CD8-positive, alpha-beta memory T cell (primary cell): ENCODE measurements at regions of chr15 and their contacts with region 1.

Region 1: DNA sequence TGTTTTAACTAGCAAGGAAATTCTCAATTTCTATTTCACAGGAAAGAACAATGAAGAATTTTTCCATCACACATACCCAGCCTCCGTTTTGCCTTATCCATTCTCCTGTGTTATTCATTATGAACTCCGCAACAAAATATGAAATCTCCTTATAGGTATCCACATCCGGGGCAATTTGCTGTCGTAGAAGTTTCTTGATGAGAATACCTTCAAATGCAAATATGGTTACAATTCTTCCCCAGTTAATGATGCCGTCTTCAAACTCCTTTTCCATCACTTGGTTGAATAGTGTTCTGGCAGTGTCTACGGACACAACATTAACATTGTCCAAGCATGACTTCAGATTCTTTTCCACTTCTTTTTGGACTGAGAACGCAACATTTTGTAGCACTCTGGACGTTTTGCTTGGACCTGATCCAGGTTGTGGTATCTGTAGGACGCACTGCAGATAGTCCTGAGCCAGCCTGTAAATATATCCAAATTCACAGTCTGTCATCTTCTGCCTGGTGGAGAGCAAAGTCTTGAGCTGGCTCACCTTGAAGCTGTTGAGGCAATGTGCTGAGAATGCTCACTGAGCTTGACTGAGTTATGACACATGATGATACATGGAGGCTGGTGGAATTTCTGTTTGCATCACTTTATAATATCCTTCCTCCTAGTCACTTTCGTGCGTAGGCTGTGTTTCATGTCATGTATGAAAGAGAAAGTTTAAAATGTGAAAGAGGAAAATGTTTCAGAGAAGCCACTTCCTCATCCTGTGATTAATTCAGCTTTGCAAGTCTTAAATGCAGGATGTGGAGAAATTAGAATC is at the start of gene BCL2A1:
- DNase-seq: peak; percentile 5 to 70 (median 63)
- H3K4me3 ChIP-seq: peak within 1 kb of the TSS; percentile 86
- H3K4me3 Mint-ChIP-seq: peak within 1 kb of the TSS; percentile 89 to 98 (median 93)
- H3K27ac ChIP-seq: peak within 1 kb of the TSS; percentile 64
- H3K27ac Mint-ChIP-seq: peak within 1 kb of the TSS; percentile 89 to 99 (median 94)
- H3K4me1 ChIP-seq: peaks cover 45% of the 10 kb centered on the region
- H3K4me1 Mint-ChIP-seq: peaks cover 41 to 73% (median 61%) of the 10 kb centered on the region in 3 donors
- H3K27me3 ChIP-seq: no peaks in the 10 kb centered on the region
- H3K27me3 Mint-ChIP-seq: no peaks in the 10 kb centered on the region
- total RNA-seq, gene BCL2A1: 55.8 to 56.8 TPM

Region 2: DNA sequence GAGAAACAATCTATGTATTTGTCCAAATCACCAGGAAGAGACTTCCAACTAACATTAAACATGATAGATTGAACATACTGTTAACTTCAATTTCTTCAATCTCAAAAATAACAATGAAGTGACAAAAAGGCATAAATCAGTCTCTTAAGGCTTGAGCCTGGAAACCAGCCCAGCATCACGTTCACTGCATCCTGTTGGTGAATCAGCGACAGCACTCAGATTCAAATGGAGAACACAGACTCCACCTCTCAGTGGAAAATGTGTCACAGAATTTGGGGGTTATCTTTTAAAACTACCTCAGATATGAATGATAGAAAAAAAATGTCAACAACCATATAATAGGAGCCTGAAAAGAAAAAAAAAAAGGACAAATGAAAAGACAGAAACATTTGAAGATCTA is 326.7 kb before region 1 on chr15:
- CTCF ChIA-PET with region 1: no interaction called
- POLR2A ChIA-PET with region 1: no interaction called
- DNase-seq: no peak
- H3K4me3 ChIP-seq: no peak overlapping the region
- H3K4me3 Mint-ChIP-seq: no peak overlapping the region
- H3K27ac ChIP-seq: no peak overlapping the region
- H3K27ac Mint-ChIP-seq: no peak overlapping the region
- H3K4me1 ChIP-seq: no peaks in the 10 kb centered on the region
- H3K4me1 Mint-ChIP-seq: no peaks in the 10 kb centered on the region
- H3K27me3 ChIP-seq: no peaks in the 10 kb centered on the region
- H3K27me3 Mint-ChIP-seq: peaks cover 13 to 25% of the 10 kb centered on the region in 2 donors

Region 3: DNA sequence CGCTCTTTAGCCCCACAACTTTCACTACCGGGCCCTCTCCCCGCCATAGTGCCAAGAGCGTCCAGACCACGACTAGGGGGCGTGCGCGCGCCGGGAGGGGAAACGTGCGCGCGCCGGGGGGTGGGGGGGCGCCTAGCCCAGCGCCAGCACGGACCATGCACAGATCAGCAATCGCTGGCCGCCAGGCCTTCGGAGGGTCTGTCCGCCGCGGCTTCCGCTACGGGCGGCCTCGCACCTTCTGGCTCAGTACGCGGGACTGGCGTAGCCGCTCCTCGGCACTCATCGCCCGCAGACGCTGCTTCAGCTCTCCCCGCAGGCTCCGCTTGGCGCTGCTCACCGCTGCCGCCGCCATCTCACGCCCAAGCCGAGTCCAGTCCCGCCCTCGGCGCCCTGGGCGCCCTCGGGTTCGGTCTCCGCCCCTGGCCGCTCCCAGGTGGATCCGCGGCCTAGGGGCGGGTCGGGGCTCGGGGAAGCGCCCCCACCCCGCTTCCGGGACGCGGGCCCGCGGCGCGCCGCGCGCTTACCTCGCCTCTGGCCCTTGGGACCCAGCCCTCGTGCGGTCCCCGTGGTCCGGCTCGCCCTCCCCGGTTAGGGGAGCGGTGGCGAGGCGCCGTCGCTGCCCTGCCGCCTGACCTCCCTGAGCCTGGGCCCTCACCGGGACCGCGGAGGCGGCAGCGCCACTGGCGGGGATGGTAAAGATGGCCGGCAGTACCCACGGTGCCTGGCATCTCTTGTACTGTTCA is 74.0 kb before region 1 on chr15 and contains the start of gene MTHFS:
- CTCF ChIA-PET with region 1: interaction called, 5 read pairs
- POLR2A ChIA-PET with region 1: interaction called, 14 read pairs
- DNase-seq: peak; percentile 62 to 87 (median 83)
- H3K4me3 ChIP-seq: peak within 1 kb of the TSS; percentile 66
- H3K4me3 Mint-ChIP-seq: peak within 1 kb of the TSS; percentile 94 to 100 (median 98)
- H3K27ac ChIP-seq: peak within 1 kb of the TSS; percentile 93
- H3K27ac Mint-ChIP-seq: peak within 1 kb of the TSS; percentile 95 to 100 (median 100)
- H3K4me1 ChIP-seq: peaks cover 29% of the 10 kb centered on the region
- H3K4me1 Mint-ChIP-seq: peaks cover 35 to 46% (median 40%) of the 10 kb centered on the region in 3 donors
- H3K27me3 ChIP-seq: no peaks in the 10 kb centered on the region
- H3K27me3 Mint-ChIP-seq: no peaks in the 10 kb centered on the region
- total RNA-seq, gene MTHFS: 30.2 to 31.1 TPM

Region 4: GRCh38 chr15:79923515-79924395 is 47.1 kb before region 1 on chr15:
- CTCF ChIA-PET with region 1: interaction called, 17 read pairs
- POLR2A ChIA-PET with region 1: interaction called, 64 read pairs
- DNase-seq: peak; percentile 96 to 100 (median 98)
- H3K4me3 ChIP-seq: peak overlapping the region; percentile 93
- H3K4me3 Mint-ChIP-seq: peak overlapping the region; percentile 92 to 98 (median 94)
- H3K27ac ChIP-seq: peak overlapping the region; percentile 97
- H3K27ac Mint-ChIP-seq: peak overlapping the region; percentile 93 to 99 (median 96)
- H3K4me1 ChIP-seq: peaks cover 17% of the 10 kb centered on the region
- H3K4me1 Mint-ChIP-seq: peaks cover 20 to 29% (median 28%) of the 10 kb centered on the region in 3 donors
- H3K27me3 ChIP-seq: no peaks in the 10 kb centered on the region
- H3K27me3 Mint-ChIP-seq: no peaks in the 10 kb centered on the region

Region 5: DNA sequence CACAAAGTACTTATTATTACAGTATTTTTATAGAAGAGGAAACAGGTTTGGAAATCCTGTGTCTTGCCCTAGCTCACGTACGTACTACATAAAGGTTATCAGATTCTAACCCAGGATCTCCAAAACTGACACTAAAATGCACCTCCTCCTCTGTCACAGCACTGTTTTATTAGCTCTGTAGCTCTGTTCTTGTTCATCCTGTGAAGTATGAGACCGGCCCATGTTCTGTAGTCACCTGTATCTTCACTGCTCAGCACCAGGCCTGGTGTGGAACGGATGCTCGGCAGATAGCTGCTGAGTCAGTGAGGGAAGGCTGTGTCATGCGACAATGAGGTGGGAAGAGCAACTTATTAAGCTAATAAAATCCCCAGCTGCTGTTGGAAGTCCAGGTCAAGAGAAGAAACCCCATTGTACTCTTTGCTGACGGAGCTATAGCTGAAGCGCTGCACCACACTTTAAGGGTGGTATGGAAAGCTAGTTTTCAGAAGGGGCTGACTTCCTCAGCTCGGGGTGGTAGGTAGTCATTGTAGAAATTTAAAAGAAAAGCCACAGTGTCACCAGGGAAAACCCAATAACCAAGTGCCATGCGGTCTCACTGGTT is 22.6 kb before region 1 on chr15:
- CTCF ChIA-PET with region 1: no interaction called
- POLR2A ChIA-PET with region 1: interaction called, 10 read pairs
- DNase-seq: no peak
- H3K4me3 ChIP-seq: no peak overlapping the region
- H3K4me3 Mint-ChIP-seq: peak overlapping the region in 1 of 7 donors; percentile 1
- H3K27ac ChIP-seq: no peak overlapping the region
- H3K27ac Mint-ChIP-seq: peak overlapping the region in 6 of 8 donors; percentile 9 to 51 (median 39)
- H3K4me1 ChIP-seq: no peaks in the 10 kb centered on the region
- H3K4me1 Mint-ChIP-seq: peaks cover 10 to 14% (median 14%) of the 10 kb centered on the region in 3 donors
- H3K27me3 ChIP-seq: no peaks in the 10 kb centered on the region
- H3K27me3 Mint-ChIP-seq: no peaks in the 10 kb centered on the region